A673 (cell line): ENCODE measurements at regions of chr1 and their contacts with region 1.

Region 1: DNA sequence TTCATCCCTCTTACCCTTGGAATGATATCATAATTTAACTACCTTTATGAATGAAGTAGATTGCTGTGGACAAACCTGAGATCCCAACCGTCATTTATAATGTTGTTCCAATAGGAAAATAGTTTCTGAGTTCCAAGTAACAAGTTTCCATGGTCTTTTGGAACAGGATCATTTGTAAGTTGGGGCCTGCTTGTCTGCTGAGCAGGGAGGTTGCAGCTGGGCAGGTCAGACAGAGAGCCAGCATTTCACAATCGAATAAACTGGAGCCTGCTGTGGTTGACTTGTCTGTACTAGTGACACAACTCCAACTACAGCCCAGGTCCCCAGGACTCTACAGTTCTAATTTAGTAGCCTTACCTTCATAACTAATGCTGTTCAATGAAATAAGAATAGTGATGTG is 18.6 kb upstream of the RALGPS2 start:
- DNase-seq: no peak
- H3K4me3 ChIP-seq: no peak overlapping the region
- H3K27ac ChIP-seq: no peak overlapping the region
- H3K4me1 ChIP-seq: no peaks in the 10 kb centered on the region
- H3K27me3 ChIP-seq: no peaks in the 10 kb centered on the region
- CTCF ChIP-seq: no peak

Region 2: DNA sequence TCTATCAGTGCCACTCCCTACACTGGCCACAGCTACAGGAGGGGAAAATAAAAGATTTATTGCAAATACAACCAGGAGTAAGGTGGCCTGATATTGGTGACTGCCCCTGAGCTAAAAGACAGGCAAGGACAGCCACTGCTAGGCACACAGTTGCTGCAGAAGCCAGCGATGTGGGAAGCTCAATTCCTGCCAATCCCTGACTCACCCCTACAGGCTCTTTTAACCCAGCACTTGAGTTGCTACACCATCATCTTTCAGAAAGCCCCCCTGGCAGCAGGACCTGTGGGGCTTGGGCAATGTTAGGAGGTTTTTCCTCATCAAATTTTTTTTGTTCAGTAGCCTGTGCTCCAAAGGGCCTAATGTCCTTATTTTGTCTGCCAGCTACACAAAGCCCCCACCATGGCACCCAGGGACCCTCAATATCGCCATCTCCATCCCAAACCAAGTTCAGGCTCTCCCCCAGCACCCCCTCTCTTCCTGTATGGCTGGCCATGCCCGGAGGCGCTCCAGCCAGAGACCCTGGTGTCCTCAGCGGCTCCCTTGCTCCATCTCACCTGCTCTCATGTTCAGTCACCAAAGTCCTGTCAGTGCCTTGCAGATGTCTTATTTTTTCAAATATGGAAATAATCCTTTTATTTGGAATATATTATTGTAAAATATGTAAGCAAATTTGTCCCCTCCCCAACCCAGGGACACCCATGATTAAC is 223.0 kb before region 1 on chr1:
- CTCF ChIA-PET with region 1: no interaction called
- POLR2A ChIA-PET with region 1: interaction called, 21 read pairs
- intact Hi-C with region 1: no loop called
- DNase-seq: no peak
- H3K4me3 ChIP-seq: no peak overlapping the region
- H3K27ac ChIP-seq: no peak overlapping the region
- H3K4me1 ChIP-seq: peaks cover 7% of the 10 kb centered on the region
- H3K27me3 ChIP-seq: no peaks in the 10 kb centered on the region
- CTCF ChIP-seq: no peak